Colonic mucosa (tissue), 4 donors: ENCODE measurements at regions of chr10 and their contacts with region 1.

Region 1: DNA sequence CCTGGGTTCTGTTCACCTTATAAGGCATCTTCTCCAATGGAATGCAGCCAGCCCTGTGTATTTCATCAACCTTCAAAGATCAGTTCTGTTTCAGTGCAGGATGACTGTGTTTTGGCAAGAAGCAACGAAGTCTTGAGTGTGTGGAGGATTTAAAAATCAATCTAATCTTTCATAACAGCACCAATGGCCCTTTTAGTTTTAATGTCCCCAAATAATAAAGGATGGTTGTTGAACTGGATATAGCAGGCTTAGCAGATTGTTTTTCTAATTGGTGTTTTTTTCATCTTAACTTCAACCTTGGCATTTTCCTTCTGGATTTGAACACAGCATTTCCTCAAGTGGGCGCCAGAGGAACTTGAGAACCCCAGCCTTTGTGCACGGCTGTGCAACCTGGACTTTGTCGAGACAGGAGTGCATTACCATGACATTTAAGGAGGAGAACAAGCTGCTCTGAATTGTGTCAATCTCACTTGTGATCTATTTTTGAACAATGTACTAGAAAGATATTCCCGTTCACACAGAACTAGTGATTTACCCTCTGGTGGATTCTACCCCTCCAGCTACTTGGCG is 313.3 kb upstream of the AKR1E2 start:
- DNase-seq: peak; percentile 39
- H3K4me3 ChIP-seq: no peak overlapping the region
- H3K27ac ChIP-seq: no peak overlapping the region
- H3K4me1 ChIP-seq: no peaks in the 10 kb centered on the region
- H3K27me3 ChIP-seq: no peaks in the 10 kb centered on the region
- CTCF ChIP-seq: peak; percentile 32

Region 2: DNA sequence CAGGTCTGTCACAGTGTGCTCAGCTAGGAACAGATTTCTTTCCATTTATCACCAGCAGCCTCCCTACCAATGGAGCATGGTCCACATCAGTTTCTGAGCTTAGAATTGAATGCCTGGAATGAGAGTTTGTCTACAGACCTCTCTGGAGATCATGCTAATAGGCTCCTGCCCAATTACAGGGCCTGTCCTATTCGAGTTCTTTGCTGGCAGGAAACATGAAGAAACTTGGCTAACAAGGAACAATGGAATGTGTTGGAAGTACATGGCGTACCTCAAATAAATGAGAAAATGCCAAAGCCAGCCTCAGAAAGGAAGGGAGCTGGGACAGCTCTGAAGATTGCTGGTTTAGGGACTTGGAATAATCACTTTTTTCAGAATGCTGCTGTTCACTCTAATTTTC is 127.2 kb after region 1 on chr10:
- intact Hi-C with region 1: no loop called
- DNase-seq: no peak
- H3K4me3 ChIP-seq: no peak overlapping the region
- H3K27ac ChIP-seq: no peak overlapping the region
- H3K4me1 ChIP-seq: no peaks in the 10 kb centered on the region
- H3K27me3 ChIP-seq: no peaks in the 10 kb centered on the region
- CTCF ChIP-seq: no peak

Region 3: DNA sequence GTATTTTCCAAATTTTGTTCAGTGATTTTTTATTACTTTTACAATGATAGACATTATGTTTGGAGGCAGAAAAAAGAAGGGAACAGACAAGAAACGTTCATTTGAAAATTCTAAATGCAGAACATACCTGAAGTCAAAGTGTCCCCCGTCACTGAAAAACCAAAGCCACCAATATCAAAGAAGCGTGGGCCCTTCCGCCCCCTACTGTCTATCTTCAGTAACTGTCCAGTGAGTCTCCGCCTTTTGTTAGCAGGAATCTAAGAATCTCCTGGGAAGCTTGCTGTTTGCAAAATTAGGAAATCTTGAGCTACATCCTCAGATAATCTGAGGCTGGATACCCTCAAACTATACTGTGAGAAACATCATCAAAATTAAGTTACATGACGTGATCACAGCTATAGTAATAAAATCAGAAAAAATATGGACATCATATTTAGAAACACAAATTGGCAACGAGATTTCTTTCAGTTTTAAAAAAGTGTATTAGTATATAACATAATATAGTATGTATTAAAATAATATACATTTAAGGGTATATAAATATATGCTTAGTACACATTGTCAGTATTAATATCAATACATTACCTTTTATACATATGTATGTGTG is 143.9 kb after region 1 on chr10:
- intact Hi-C with region 1: loop called (anchors 5 kb)
- DNase-seq: peak; percentile 68
- H3K4me3 ChIP-seq: no peak overlapping the region
- H3K27ac ChIP-seq: no peak overlapping the region
- H3K4me1 ChIP-seq: no peaks in the 10 kb centered on the region
- H3K27me3 ChIP-seq: no peaks in the 10 kb centered on the region
- CTCF ChIP-seq: peak; percentile 82